ENCODE measurements at regions of chr22 and their contacts with region 1.

Region 1: DNA sequence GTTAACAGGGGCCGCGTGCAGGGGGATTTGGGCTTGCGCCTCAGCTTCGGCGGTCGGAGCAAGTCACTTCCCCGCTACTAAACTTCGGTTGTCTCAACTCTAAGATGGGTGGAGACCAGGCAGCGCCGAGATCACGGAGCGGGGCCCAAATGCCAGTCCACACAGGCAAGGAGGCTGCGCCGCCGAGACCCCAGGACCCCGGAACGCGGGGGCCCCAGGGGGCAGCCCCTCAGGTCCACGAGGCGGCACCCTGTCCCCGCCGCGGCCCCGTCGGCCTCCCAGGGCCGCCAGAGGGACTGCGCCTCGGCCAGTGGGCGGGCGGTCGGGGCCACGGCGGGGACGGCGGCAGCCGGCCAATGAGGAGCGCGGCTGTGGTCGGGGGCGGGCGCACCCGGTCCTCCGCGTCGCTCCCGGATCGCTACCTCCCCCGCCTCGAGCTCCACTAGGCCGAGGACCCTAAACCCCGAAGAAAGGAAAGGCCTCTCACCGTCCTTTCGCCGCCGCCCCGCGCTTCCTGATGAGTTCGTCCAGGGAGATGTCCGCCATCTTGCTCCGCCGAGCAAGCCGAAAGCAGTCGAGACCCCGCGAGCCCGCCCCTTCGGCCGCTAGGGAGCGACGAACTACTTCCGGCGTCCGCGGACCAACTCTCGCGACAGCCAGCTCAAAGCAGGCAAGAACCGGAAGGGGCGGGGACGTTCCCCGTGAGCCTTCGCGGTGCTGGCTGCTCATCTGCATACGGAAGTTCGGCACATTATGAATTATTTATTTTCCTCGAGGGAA is at the start of gene POLDIP3:
- DNase-seq: peak; percentile 97 to 99 (median 99)
- ATAC-seq: peak; percentile 69
- H3K4me3 ChIP-seq: peak within 1 kb of the TSS; percentile 69 to 86
- H3K4me3 Mint-ChIP-seq: peak within 1 kb of the TSS; percentile 97
- H3K27ac ChIP-seq: peak within 1 kb of the TSS; percentile 85 to 97
- H3K27ac Mint-ChIP-seq: peak within 1 kb of the TSS; percentile 100
- H3K4me1 ChIP-seq: peaks cover 50% of the 10 kb centered on the region
- H3K4me1 Mint-ChIP-seq: peaks cover 52% of the 10 kb centered on the region
- H3K27me3 ChIP-seq: no peaks in the 10 kb centered on the region
- H3K27me3 Mint-ChIP-seq: no peaks in the 10 kb centered on the region
- CTCF ChIP-seq: no peak
- total RNA-seq, gene POLDIP3: 96.4 to 103 TPM

Region 2: GRCh38 chr22:41621099-41621910 is 993.2 kb before region 1 on chr22 and contains the start of gene XRCC6:
- CTCF ChIA-PET with region 1: no interaction called
- POLR2A ChIA-PET with region 1: no interaction called
- intact Hi-C with region 1: loop called in 1 of 2 experiments (anchors 5 kb)
- DNase-seq: peak; percentile 99 to 100 (median 100)
- ATAC-seq: peak; percentile 93
- H3K4me3 ChIP-seq: peak within 1 kb of the TSS; percentile 84 to 100
- H3K4me3 Mint-ChIP-seq: peak within 1 kb of the TSS; percentile 100
- H3K27ac ChIP-seq: peak within 1 kb of the TSS; percentile 95 to 100
- H3K27ac Mint-ChIP-seq: peak within 1 kb of the TSS; percentile 100
- H3K4me1 ChIP-seq: peaks cover 25% of the 10 kb centered on the region
- H3K4me1 Mint-ChIP-seq: peaks cover 52% of the 10 kb centered on the region
- H3K27me3 ChIP-seq: no peaks in the 10 kb centered on the region
- H3K27me3 Mint-ChIP-seq: no peaks in the 10 kb centered on the region
- CTCF ChIP-seq: no peak
- total RNA-seq, gene XRCC6: 202 to 205 TPM

Region 3: DNA sequence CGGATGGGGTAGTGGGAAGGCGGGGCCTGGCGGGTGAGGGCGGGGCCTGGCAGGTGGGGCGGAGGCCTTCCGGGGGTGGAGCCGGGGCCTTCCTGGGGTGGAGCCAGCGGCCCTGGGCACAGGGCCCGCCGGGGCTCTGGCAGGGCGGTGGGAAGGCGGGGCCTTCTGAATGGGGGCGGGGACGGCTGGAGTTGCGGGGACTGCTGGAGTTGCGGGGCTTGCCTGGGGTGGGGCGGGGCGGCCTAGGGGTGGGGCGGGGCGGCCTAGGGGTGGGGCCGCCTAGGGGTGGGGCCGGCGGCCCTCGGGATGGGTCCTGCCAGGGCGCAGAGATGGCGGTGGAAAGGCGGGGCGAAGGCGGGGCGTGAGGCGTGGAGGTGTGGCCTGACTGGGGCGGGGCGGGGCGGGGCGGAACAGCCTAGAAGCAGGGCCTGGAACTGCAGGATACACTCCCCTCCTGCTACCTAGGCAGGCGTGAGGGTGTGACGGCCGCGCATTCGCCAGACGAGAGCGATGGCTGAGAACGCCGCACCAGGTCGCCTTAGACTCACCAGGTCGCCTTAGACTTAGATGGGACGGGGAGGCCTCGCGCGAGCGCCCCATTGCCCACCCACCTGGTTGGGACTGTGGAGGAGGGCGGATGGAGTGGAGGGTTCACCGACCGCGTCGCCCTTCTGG is 114.2 kb before region 1 on chr22:
- CTCF ChIA-PET with region 1: no interaction called
- POLR2A ChIA-PET with region 1: no interaction called
- intact Hi-C with region 1: loop called in 1 of 2 experiments (anchors 1 kb)
- DNase-seq: peak; percentile 67 to 91 (median 82)
- ATAC-seq: peak; percentile 94
- H3K4me3 ChIP-seq: peak overlapping the region; percentile 42 to 48
- H3K4me3 Mint-ChIP-seq: peak overlapping the region; percentile 72
- H3K27ac ChIP-seq: no peak overlapping the region
- H3K27ac Mint-ChIP-seq: no peak overlapping the region
- H3K4me1 ChIP-seq: peaks cover 7% of the 10 kb centered on the region
- H3K4me1 Mint-ChIP-seq: peaks cover 4% of the 10 kb centered on the region
- H3K27me3 ChIP-seq: no peaks in the 10 kb centered on the region
- H3K27me3 Mint-ChIP-seq: no peaks in the 10 kb centered on the region
- CTCF ChIP-seq: no peak

Region 4: GRCh38 chr22:42533638-42533977 is 80.9 kb before region 1 on chr22:
- CTCF ChIA-PET with region 1: no interaction called
- POLR2A ChIA-PET with region 1: no interaction called
- intact Hi-C with region 1: loop called (anchors 2 to 5 kb)
- DNase-seq: peak in 1 of 9 experiments; percentile 38
- ATAC-seq: peak; percentile 27
- H3K4me3 ChIP-seq: peak overlapping the region; percentile 24 to 58
- H3K4me3 Mint-ChIP-seq: peak overlapping the region; percentile 84
- H3K27ac ChIP-seq: peak overlapping the region; percentile 56 to 93
- H3K27ac Mint-ChIP-seq: peak overlapping the region; percentile 90
- H3K4me1 ChIP-seq: peaks cover 6% of the 10 kb centered on the region
- H3K4me1 Mint-ChIP-seq: peaks cover 12% of the 10 kb centered on the region
- H3K27me3 ChIP-seq: no peaks in the 10 kb centered on the region
- H3K27me3 Mint-ChIP-seq: no peaks in the 10 kb centered on the region
- CTCF ChIP-seq: no peak

Region 5: DNA sequence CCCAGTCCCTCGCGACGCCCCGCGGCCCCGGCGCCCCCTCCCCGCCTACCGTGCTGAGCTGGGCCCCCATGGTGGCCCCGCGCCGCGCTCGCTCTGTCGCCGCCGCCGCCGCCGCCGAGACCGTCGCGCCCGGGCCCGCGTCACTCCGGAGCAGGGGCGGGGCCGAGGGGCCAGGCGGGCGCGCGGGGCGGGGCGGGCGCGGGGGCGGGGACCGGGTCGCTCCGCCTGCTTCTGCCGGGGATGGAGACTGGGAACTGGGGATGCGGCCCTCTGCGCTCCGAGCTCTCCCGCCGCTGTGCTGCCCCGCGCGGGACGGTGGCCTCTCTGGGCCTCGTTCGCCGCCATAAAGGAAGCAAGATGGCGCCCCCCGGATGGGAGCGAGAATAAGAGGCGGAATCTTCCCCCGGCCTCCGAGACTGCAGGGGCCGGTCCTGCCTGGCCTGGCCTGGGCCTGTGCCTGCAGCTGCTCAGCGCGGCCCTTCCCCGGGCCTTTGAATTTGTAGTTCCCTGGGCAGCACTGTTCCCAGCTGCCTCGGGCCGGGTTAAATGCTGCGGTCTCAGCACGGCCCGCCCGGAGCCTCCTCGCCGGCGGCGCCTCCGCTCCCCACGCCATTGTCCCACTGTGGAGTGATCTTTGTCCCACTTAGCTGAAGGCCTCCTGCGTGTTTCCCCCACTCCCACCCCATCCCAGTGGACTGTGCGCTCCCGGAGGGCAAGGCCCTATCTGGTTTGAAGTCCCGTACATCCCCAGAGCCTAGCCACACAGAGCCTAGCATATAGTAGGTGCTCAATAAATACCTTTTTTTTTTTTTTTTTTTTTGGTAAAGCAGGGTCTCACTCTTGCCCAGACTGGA is 35.0 kb after region 1 on chr22 and contains the start of gene CYB5R3:
- CTCF ChIA-PET with region 1: no interaction called
- POLR2A ChIA-PET with region 1: interaction called, 23 read pairs
- intact Hi-C with region 1: loop called (anchors 1 kb)
- DNase-seq: peak; percentile 41 to 84 (median 71)
- ATAC-seq: peak; percentile 78
- H3K4me3 ChIP-seq: peak within 1 kb of the TSS; percentile 73 to 99
- H3K4me3 Mint-ChIP-seq: peak within 1 kb of the TSS; percentile 99
- H3K27ac ChIP-seq: peak within 1 kb of the TSS; percentile 81 to 90
- H3K27ac Mint-ChIP-seq: peak within 1 kb of the TSS; percentile 100
- H3K4me1 ChIP-seq: peaks cover 39% of the 10 kb centered on the region
- H3K4me1 Mint-ChIP-seq: peaks cover 31% of the 10 kb centered on the region
- H3K27me3 ChIP-seq: no peaks in the 10 kb centered on the region
- H3K27me3 Mint-ChIP-seq: peaks cover 2% of the 10 kb centered on the region
- CTCF ChIP-seq: no peak
- total RNA-seq, gene CYB5R3: 43.8 to 50.2 TPM

Region 6: GRCh38 chr22:43014869-43015676 is 400.6 kb after region 1 on chr22 and contains the start of gene PACSIN2:
- CTCF ChIA-PET with region 1: no interaction called
- POLR2A ChIA-PET with region 1: interaction called, 3 read pairs
- intact Hi-C with region 1: loop called in 1 of 2 experiments (anchors 10 kb)
- DNase-seq: peak; percentile 98 to 99 (median 98)
- ATAC-seq: peak; percentile 98
- H3K4me3 ChIP-seq: peak within 1 kb of the TSS; percentile 79 to 85
- H3K4me3 Mint-ChIP-seq: peak within 1 kb of the TSS; percentile 98
- H3K27ac ChIP-seq: peak within 1 kb of the TSS; percentile 73 to 76
- H3K27ac Mint-ChIP-seq: peak within 1 kb of the TSS; percentile 97
- H3K4me1 ChIP-seq: peaks cover 14% of the 10 kb centered on the region
- H3K4me1 Mint-ChIP-seq: peaks cover 33% of the 10 kb centered on the region
- H3K27me3 ChIP-seq: no peaks in the 10 kb centered on the region
- H3K27me3 Mint-ChIP-seq: no peaks in the 10 kb centered on the region
- CTCF ChIP-seq: no peak
- total RNA-seq, gene PACSIN2: 16.8 to 18.5 TPM